ENCODE measurements at regions of chr1 and their contacts with region 1.

Region 1: DNA sequence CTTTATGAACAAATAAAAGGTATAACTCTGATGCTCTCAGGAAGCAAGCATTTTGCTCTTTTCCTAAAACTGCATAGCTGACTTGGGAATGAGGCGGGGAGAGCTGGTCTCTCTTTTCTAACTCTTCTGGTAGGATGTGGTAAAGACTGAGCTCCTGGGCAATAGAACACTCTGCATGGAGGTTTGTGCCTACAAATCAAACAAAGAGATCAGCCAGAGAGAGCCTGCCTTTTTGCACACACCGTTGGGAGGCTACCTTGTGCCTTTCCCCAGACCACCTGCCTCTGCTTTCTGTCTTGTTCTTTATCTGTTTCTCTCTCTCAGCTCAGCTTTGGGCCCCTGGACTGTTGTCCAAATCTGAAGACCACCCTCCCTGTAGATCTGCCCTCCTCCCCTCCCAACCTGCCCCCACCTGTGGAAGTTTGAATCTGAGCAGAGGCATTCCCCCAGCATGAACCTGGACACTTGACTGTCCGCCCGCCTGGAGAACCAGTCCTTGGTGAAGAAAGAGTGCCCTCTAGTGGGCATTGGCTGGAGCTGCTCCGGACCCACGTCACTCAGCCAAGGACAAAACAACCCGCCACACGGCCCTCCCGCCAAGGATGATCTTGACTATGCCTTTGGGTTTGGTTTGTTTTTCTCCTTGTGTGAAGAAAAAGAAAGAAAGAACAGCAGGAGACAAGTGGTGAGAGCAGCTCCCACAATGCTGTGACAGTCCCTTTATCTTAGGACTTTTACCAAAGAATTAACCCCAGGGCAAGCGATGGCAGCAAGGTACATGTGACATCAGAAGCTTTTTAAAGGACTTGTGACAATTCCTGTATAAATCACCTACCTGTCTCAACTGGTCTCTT is 228.2 kb downstream of the PBX1 start:
- DNase-seq: peak; percentile 79 to 92 (median 90)
- H3K4me3 ChIP-seq: peak overlapping the region in 43 of 59 donors; percentile 2 to 56 (median 26)
- H3K27ac ChIP-seq: peak overlapping the region in 47 of 59 donors; percentile 2 to 81 (median 55)
- H3K27me3 ChIP-seq: no peaks in the 10 kb centered on the region
- CTCF ChIP-seq: peak; percentile 56 to 94 (median 90)

Region 2: GRCh38 chr1:163361123-163361934 is 1425.9 kb before region 1 on chr1:
- intact Hi-C with region 1: loop called in 1 of 2 experiments (anchors 10 kb)
- DNase-seq: no peak
- H3K4me3 ChIP-seq: no peak overlapping the region
- H3K27ac ChIP-seq: no peak overlapping the region
- H3K27me3 ChIP-seq: no peaks in the 10 kb centered on the region
- CTCF ChIP-seq: peak in 54 of 56 donors; percentile 22 to 78 (median 56)

Region 3: DNA sequence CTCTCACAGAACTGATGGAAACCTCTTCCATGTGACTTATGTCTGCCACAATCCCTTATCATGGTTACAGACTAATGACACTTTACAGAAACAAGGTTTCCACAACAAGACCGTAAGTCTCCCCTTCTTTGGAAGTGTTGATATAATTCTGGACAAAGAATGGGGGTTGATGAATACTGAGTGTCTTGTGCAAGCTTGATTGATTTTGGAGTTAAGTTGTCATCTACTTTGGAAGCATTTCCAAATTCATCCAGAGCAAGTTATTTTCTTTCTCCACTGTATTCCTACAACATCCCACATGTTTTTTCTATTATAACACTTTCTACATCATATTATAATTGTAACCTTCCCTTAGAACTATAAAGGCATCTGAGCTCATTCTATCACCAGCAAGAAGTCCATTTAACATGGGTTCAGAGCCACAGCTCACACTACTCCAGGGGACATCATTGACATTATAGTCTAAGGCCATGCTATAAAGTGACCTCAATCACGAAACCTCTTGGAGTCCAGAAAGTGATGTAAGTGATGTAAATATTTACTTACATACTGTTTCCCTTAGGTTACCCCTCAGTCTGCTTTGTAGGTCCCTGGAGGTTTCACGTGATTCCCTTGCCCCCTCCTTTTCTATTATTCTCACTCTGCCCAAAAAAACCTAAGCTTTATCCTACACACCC is 353.9 kb before region 1 on chr1:
- intact Hi-C with region 1: loop called in 1 of 2 experiments (anchors 5 kb)
- DNase-seq: no peak
- H3K4me3 ChIP-seq: no peak overlapping the region
- H3K27ac ChIP-seq: no peak overlapping the region
- H3K27me3 ChIP-seq: no peaks in the 10 kb centered on the region
- CTCF ChIP-seq: no peak

Region 4: GRCh38 chr1:164559342-164560051 is 227.7 kb before region 1 on chr1:
- intact Hi-C with region 1: loop called (anchors 5 kb)
- DNase-seq: peak; percentile 28 to 60 (median 42)
- H3K4me3 ChIP-seq: peak overlapping the region; percentile 50 to 91 (median 76)
- H3K27ac ChIP-seq: peak overlapping the region; percentile 56 to 93 (median 87)
- H3K27me3 ChIP-seq: no peaks in the 10 kb centered on the region
- CTCF ChIP-seq: no peak

Region 5: DNA sequence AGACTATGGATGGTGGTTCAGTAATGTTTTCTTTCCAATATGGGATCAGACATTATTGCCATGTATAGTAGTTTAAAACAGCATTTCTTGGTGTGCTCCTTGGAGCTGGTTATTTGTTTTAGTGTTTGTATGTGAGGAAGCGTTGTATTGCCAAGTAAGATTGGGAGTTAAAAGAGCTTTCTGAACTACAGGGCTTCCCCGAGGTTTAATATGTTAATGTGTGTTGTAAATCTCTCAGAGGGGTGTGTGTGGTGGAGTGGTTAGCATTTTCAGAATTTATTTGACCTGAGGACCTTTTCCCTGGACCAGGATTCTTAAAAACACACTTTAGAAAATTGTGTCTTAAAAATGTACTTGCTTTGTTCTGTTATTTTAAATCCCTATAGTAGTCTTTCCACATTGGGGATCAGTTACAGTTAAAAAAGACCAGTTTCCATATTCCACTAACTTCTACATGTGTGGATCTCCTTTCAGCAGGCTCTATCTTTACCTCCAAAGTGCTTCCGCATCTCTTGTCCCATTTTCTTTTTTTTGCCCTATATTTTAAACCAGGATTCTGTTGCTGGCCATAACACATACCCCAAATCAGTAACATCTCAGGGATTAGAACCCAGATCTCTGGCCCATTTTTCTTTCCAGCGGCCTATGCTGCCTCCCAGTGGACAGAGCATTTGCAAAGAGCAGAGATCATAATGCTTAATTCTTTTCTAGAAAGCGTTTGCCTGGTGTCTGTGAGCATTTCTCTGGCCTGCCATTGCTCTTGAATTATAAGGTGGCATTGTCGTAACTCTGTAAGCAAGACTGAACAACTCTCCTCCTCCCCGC is 169.6 kb before region 1 on chr1:
- intact Hi-C with region 1: loop called in 1 of 2 experiments (anchors 5 kb)
- DNase-seq: no peak
- H3K4me3 ChIP-seq: no peak overlapping the region
- H3K27ac ChIP-seq: no peak overlapping the region
- H3K27me3 ChIP-seq: no peaks in the 10 kb centered on the region
- CTCF ChIP-seq: peak in 53 of 56 donors; percentile 19 to 71 (median 48)

Region 6: GRCh38 chr1:164673584-164674214 is 113.5 kb before region 1 on chr1:
- intact Hi-C with region 1: loop called in 1 of 2 experiments (anchors 10 kb)
- DNase-seq: no peak
- H3K4me3 ChIP-seq: no peak overlapping the region
- H3K27ac ChIP-seq: no peak overlapping the region
- H3K27me3 ChIP-seq: no peaks in the 10 kb centered on the region
- CTCF ChIP-seq: peak in 49 of 56 donors; percentile 12 to 59 (median 36)

Region 7: GRCh38 chr1:164707868-164708331 is 79.3 kb before region 1 on chr1:
- intact Hi-C with region 1: loop called in 1 of 2 experiments (anchors 10 kb)
- DNase-seq: no peak
- H3K4me3 ChIP-seq: peak overlapping the region in 1 of 59 donors; percentile 8
- H3K27ac ChIP-seq: peak overlapping the region in 46 of 59 donors; percentile 4 to 81 (median 63)
- H3K27me3 ChIP-seq: no peaks in the 10 kb centered on the region
- CTCF ChIP-seq: no peak

Measured in dorsolateral prefrontal cortex (tissue), 120 donors.